Cardiac septum (tissue), 1 donor: ENCODE measurements at regions of chr12 and their contacts with region 1.

Region 1: GRCh38 chr12:113271853-113272561 is 50.7 kb downstream of the TPCN1 start:
- DNase-seq: peak; percentile 88

Region 2: GRCh38 chr12:113196996-113197395 is 75.0 kb before region 1 on chr12:
- intact Hi-C with region 1: loop called (anchors 5 kb)
- DNase-seq: peak; percentile 79

Region 3: DNA sequence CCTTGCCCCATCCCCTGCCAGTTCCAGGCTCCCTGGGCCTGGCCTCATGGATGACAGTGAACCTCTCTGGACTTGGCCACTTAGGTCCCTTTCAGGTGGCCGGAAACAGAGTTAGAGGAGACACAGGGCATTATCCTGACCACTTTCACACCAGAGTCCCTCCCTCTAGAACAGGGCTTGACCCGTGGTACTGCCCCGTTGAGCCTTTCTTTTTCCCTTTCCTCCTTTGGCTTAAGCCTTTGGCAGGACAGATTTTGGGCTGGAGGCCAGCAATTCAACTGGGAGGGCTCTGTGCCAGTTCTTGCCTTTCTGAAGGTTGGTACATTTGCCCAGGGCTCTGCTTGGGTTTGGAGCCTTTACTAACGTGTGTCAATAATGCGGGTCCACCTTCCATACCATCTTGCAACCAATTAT is 28.0 kb before region 1 on chr12:
- intact Hi-C with region 1: loop called (anchors 5 kb)
- DNase-seq: no peak

Region 4: DNA sequence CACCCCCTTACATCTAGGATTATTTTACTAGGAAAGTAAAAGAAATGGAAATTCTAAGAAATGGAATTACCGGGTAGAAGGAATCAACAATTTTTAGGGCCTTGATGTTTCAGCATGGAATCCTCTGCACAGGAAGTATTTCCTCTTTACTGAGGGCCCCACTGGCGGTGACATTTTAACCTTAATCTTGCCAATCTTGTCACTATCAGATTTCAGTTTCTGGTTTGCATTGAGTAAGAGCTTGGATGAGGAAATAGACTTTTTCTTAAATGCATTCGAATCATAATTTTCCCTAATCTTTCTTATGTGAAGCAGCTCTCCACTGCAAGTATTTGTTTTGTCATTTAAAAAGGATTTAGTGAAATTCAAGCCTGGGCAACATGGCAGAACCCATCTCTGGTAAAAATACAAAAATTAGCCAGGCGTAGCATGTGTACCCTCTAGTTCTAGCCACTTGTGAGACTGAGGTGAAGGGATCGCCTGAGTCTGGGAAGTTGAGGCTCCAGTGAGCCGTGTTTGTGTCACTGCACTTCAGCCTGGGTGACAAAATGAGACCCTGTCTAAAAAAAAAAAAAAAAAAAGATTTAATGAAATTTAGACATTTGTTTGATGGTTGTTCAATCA is 10.0 kb before region 1 on chr12:
- intact Hi-C with region 1: loop called (anchors 1 kb)
- DNase-seq: no peak

Region 5: DNA sequence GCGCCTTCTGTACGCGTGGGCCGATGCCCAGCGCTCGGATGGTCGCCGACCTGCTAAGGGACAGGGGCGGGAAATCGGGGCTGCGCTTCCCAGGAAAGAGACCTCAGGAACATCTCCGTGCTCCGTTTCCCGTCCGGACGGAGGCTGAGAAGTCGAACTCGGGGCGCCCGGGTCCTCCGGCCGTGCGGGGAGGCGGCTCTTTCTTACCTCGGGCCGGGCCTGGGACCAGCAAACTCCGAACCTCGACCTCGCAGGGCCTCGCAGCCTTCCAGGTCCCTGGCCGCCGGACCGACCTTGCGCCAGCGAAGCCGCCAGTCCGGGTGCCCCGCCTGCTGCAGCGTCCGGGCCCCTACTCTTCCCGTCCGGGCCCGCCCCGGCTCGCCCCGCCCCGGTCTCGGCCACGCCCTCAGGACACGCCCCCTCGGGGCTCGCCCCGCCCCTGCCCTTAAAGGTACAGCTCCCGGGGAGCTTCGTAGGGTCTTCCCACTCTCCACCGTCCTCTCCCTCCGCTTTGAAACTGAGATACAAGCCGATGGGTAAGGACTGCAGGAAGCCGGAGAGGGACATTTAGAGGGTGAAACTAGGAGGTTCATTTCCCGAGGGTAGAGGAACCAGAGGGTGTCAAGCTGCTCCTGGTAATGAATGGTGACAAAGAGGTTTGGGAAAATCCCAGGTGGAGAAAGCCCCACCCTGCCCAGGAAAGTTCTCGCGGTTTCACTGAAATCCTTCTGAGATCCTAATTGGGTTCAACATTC is 63.0 kb after region 1 on chr12 and contains the start of gene SLC8B1:
- intact Hi-C with region 1: no loop called
- DNase-seq: peak; percentile 97
- total RNA-seq, gene SLC8B1: 11.0 TPM